ENCODE measurements at regions of chr12 and their contacts with region 1.

Region 1: GRCh38 chr12:21940549-21941505 is at the start of gene ABCC9:
- DNase-seq: peak; percentile 77 to 83
- H3K4me3 ChIP-seq: peak within 1 kb of the TSS; percentile 56
- H3K4me3 Mint-ChIP-seq: peak within 1 kb of the TSS; percentile 94
- H3K27ac Mint-ChIP-seq: peak within 1 kb of the TSS; percentile 95
- H3K4me1 ChIP-seq: no peaks in the 10 kb centered on the region
- H3K4me1 Mint-ChIP-seq: peaks cover 17% of the 10 kb centered on the region
- H3K27me3 ChIP-seq: no peaks in the 10 kb centered on the region
- H3K27me3 Mint-ChIP-seq: no peaks in the 10 kb centered on the region
- CTCF ChIP-seq: peak in 1 of 2 experiments; percentile 15
- total RNA-seq, gene ABCC9: 123 and 130 TPM in 2 replicates

Region 2: GRCh38 chr12:21444193-21445146 is 496.4 kb before region 1 on chr12:
- CTCF ChIA-PET with region 1: no interaction called
- POLR2A ChIA-PET with region 1: no interaction called
- intact Hi-C with region 1: loop called (anchors 1 kb)
- DNase-seq: peak in 1 of 2 experiments; percentile 46
- H3K4me3 ChIP-seq: no peak overlapping the region
- H3K4me3 Mint-ChIP-seq: no peak overlapping the region
- H3K27ac Mint-ChIP-seq: no peak overlapping the region
- H3K4me1 ChIP-seq: peaks cover 14% of the 10 kb centered on the region
- H3K4me1 Mint-ChIP-seq: peaks cover 13% of the 10 kb centered on the region
- H3K27me3 ChIP-seq: peaks cover 6% of the 10 kb centered on the region
- H3K27me3 Mint-ChIP-seq: peaks cover 16% of the 10 kb centered on the region
- CTCF ChIP-seq: no peak

Region 3: GRCh38 chr12:21697904-21698630 is 242.8 kb before region 1 on chr12:
- CTCF ChIA-PET with region 1: interaction called, 10 read pairs
- POLR2A ChIA-PET with region 1: interaction called, 4 read pairs
- intact Hi-C with region 1: loop called (anchors 1 kb)
- DNase-seq: peak in 1 of 2 experiments; percentile 47
- H3K4me3 ChIP-seq: no peak overlapping the region
- H3K4me3 Mint-ChIP-seq: peak overlapping the region; percentile 45
- H3K27ac Mint-ChIP-seq: peak overlapping the region; percentile 13
- H3K4me1 ChIP-seq: peaks cover 11% of the 10 kb centered on the region; the same call in 1 of the 2 replicates
- H3K4me1 Mint-ChIP-seq: peaks cover 13% of the 10 kb centered on the region
- H3K27me3 ChIP-seq: no peaks in the 10 kb centered on the region
- H3K27me3 Mint-ChIP-seq: no peaks in the 10 kb centered on the region
- CTCF ChIP-seq: peak; percentile 54 to 85

Region 4: DNA sequence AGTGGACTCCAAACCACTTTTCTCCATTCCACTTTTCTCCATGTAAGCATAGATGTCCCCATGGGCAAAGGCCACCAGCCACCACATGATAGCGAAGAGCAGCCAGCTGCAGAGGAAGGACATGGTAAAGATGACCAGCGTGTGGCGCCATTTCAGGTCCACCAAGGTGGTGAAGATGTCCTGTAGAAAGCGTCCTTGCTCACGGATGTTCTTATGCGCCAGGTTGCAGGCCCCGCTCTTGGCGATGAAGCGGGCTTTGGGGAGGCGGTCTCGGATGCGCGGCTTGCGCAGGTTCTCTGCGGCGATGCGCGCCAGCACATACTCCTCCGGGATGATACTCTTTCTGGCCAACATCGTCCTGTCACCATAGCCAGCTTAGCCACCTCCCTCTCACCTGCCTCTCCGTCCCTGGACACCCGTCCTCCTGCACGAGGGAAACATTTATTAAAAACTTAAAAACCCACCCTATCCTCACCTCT is 167.5 kb before region 1 on chr12:
- CTCF ChIA-PET with region 1: interaction called, 11 read pairs
- POLR2A ChIA-PET with region 1: interaction called, 18 read pairs
- intact Hi-C with region 1: loop called (anchors 1 kb)
- DNase-seq: peak; percentile 88 to 89
- H3K4me3 ChIP-seq: peak overlapping the region; percentile 88
- H3K4me3 Mint-ChIP-seq: peak overlapping the region; percentile 76
- H3K27ac Mint-ChIP-seq: peak overlapping the region; percentile 41
- H3K4me1 ChIP-seq: peaks cover 35% of the 10 kb centered on the region
- H3K4me1 Mint-ChIP-seq: peaks cover 51% of the 10 kb centered on the region
- H3K27me3 ChIP-seq: no peaks in the 10 kb centered on the region
- H3K27me3 Mint-ChIP-seq: no peaks in the 10 kb centered on the region
- CTCF ChIP-seq: peak; percentile 76 to 87

Region 5: GRCh38 chr12:21884936-21885335 is 55.9 kb before region 1 on chr12:
- CTCF ChIA-PET with region 1: no interaction called
- POLR2A ChIA-PET with region 1: no interaction called
- intact Hi-C with region 1: loop called (anchors 5 kb)
- DNase-seq: no peak
- H3K4me3 ChIP-seq: no peak overlapping the region
- H3K4me3 Mint-ChIP-seq: no peak overlapping the region
- H3K27ac Mint-ChIP-seq: no peak overlapping the region
- H3K4me1 ChIP-seq: no peaks in the 10 kb centered on the region; the same call in 1 of the 2 replicates
- H3K4me1 Mint-ChIP-seq: no peaks in the 10 kb centered on the region
- H3K27me3 ChIP-seq: no peaks in the 10 kb centered on the region
- H3K27me3 Mint-ChIP-seq: no peaks in the 10 kb centered on the region
- CTCF ChIP-seq: no peak

Region 6: GRCh38 chr12:21912318-21912717 is 28.5 kb before region 1 on chr12:
- CTCF ChIA-PET with region 1: no interaction called
- POLR2A ChIA-PET with region 1: no interaction called
- intact Hi-C with region 1: no loop called
- DNase-seq: no peak
- H3K4me3 ChIP-seq: no peak overlapping the region
- H3K4me3 Mint-ChIP-seq: no peak overlapping the region
- H3K27ac Mint-ChIP-seq: no peak overlapping the region
- H3K4me1 ChIP-seq: no peaks in the 10 kb centered on the region
- H3K4me1 Mint-ChIP-seq: no peaks in the 10 kb centered on the region
- H3K27me3 ChIP-seq: no peaks in the 10 kb centered on the region
- H3K27me3 Mint-ChIP-seq: no peaks in the 10 kb centered on the region
- CTCF ChIP-seq: no peak

Region 7: GRCh38 chr12:21989819-21990412 is 49.1 kb after region 1 on chr12:
- CTCF ChIA-PET with region 1: interaction called, 12 read pairs
- POLR2A ChIA-PET with region 1: interaction called, 4 read pairs
- intact Hi-C with region 1: loop called (anchors 1 kb)
- DNase-seq: peak in 1 of 2 experiments; percentile 46
- H3K4me3 ChIP-seq: no peak overlapping the region
- H3K4me3 Mint-ChIP-seq: no peak overlapping the region
- H3K27ac Mint-ChIP-seq: no peak overlapping the region
- H3K4me1 ChIP-seq: peaks cover 24% of the 10 kb centered on the region
- H3K4me1 Mint-ChIP-seq: peaks cover 35% of the 10 kb centered on the region
- H3K27me3 ChIP-seq: no peaks in the 10 kb centered on the region
- H3K27me3 Mint-ChIP-seq: no peaks in the 10 kb centered on the region
- CTCF ChIP-seq: peak; percentile 83 to 85

Measured in Caco-2 (cell line).